Activated CD4-positive, alpha-beta T cell treated with anti-CD3 and anti-CD28 coated beads, Interleukin-2, amount 10 ng/mL, durations not matched to agents 7 days and 5 days (primary cell): ENCODE measurements at regions of chr5 and their contacts with region 1.

Region 1: GRCh38 chr5:90503596-90503995 is 25.8 kb downstream of the LYSMD3 start:
- DNase-seq: no peak
- H3K4me3 Mint-ChIP-seq: no peak overlapping the region
- H3K27ac Mint-ChIP-seq: no peak overlapping the region
- H3K4me1 Mint-ChIP-seq: peaks cover 7% of the 10 kb centered on the region
- H3K27me3 Mint-ChIP-seq: no peaks in the 10 kb centered on the region

Region 2: GRCh38 chr5:90446961-90447360 is 56.6 kb before region 1 on chr5:
- CTCF ChIA-PET with region 1: no interaction called
- POLR2A ChIA-PET with region 1: interaction called, 10 read pairs
- DNase-seq: no peak
- H3K4me3 Mint-ChIP-seq: no peak overlapping the region
- H3K27ac Mint-ChIP-seq: no peak overlapping the region
- H3K4me1 Mint-ChIP-seq: no peaks in the 10 kb centered on the region
- H3K27me3 Mint-ChIP-seq: peaks cover 6% of the 10 kb centered on the region